GM10248 (cell line): ENCODE measurements at regions of chr1 and their contacts with region 1.

Region 1: DNA sequence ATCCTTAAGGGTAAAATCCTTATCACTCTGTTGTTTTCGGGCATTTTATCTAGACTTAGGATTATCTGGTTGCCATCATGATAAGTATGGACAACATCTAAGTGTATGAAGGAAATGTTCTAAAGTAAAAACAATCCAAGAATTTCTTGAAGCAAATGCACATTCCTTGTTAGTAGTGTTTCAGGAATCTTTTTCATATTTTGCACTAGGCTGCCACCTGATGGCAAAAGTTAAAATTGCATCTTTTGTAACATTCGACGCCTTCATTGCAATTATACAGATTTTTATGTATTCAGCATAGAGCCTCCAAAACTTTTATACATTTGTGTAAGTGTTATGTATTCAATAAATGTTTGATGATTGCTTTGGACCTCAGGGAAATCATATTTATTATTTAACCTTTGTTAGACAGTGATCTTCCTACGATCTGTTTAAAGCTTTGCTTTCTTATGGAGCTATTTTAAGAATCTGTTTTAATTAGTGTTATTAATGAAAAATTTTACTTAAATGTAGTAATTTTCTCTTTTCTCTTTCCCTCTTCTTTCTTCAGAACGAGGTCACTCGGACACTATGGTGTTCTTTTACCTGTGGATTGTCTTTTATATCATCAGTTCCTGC is 49.4 kb upstream of the KIAA1614 start:
- DNase-seq: no peak
- CTCF ChIP-seq: peak; percentile 72

Region 2: GRCh38 chr1:180533266-180533987 is 329.8 kb before region 1 on chr1:
- CTCF ChIA-PET with region 1: interaction called, 125 read pairs
- POLR2A ChIA-PET with region 1: no interaction called
- DNase-seq: peak; percentile 72
- CTCF ChIP-seq: peak; percentile 88

Region 3: GRCh38 chr1:180643693-180644092 is 219.6 kb before region 1 on chr1:
- CTCF ChIA-PET with region 1: no interaction called
- POLR2A ChIA-PET with region 1: no interaction called
- DNase-seq: no peak
- CTCF ChIP-seq: no peak

Region 4: DNA sequence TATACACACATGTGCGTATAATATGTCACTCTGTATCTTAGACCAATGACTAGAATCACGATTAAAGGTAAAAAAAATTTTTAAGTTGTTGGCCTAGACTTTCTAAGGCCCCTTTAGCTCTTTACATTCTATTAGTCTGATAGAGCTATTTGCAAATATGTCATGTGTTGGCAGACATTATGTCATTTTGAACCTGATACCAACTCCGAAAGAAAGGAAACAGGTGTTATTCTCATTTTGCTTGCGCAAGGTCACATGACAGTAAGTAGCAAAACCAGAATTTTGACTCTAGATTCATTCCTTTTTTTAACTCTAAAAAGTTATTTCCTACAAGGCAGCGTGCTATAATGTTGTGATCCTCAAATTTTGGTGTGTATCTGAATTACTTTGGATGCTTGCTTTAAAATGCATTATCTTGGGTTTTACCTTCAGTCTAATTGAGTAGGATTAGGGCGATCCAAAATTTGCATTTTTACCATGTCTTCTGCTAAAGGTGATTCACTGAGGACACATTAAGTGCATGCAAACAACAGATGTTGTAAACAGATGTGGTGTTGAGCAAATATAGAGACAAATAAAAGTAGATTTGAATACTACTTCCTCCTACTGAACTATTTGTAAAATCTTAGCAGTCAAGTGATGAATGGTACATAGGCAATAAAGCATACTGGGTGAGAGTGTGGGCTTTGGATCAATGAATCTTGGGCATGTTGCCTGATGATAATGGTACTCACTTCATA is 14.1 kb before region 1 on chr1:
- CTCF ChIA-PET with region 1: interaction called, 25 read pairs
- POLR2A ChIA-PET with region 1: no interaction called
- DNase-seq: peak; percentile 47
- CTCF ChIP-seq: no peak

Region 5: GRCh38 chr1:180912801-180913565 is 49.7 kb after region 1 on chr1 and contains the start of gene KIAA1614:
- CTCF ChIA-PET with region 1: no interaction called
- POLR2A ChIA-PET with region 1: no interaction called
- DNase-seq: no peak
- CTCF ChIP-seq: no peak